Activated T-helper 2 cell treated with anti-CD3 and anti-CD28 coated beads, Interferon-gamma antibody, Interleukin-2, Interleukin-4, amounts not matched to agents 10 μg/mL and 5 μg/mL and 100 μg/mL, durations not matched to agents 14 hours and 24 hours and 36 hours (primary cell): ENCODE measurements at regions of chr9 and their contacts with region 1.

Region 1: GRCh38 chr9:68653141-68653595 is 51.9 kb upstream of the PIP5K1B start:
- DNase-seq: peak; percentile 22
- H3K4me3 Mint-ChIP-seq: peak overlapping the region; percentile 18
- H3K27ac Mint-ChIP-seq: peak overlapping the region; percentile 95
- H3K4me1 Mint-ChIP-seq: peaks cover 64% of the 10 kb centered on the region
- H3K27me3 Mint-ChIP-seq: no peaks in the 10 kb centered on the region

Region 2: GRCh38 chr9:68672215-68672614 is 19.0 kb after region 1 on chr9:
- intact Hi-C with region 1: loop called (anchors 1 kb)
- DNase-seq: no peak
- H3K4me3 Mint-ChIP-seq: no peak overlapping the region
- H3K27ac Mint-ChIP-seq: peak overlapping the region; percentile 25
- H3K4me1 Mint-ChIP-seq: peaks cover 22% of the 10 kb centered on the region
- H3K27me3 Mint-ChIP-seq: peaks cover 6% of the 10 kb centered on the region

Region 3: GRCh38 chr9:68714416-68715180 is 61.4 kb after region 1 on chr9:
- intact Hi-C with region 1: loop called (anchors 2 kb)
- DNase-seq: no peak
- H3K4me3 Mint-ChIP-seq: no peak overlapping the region
- H3K27ac Mint-ChIP-seq: peak overlapping the region; percentile 25
- H3K4me1 Mint-ChIP-seq: peaks cover 61% of the 10 kb centered on the region
- H3K27me3 Mint-ChIP-seq: peaks cover 4% of the 10 kb centered on the region

Region 4: DNA sequence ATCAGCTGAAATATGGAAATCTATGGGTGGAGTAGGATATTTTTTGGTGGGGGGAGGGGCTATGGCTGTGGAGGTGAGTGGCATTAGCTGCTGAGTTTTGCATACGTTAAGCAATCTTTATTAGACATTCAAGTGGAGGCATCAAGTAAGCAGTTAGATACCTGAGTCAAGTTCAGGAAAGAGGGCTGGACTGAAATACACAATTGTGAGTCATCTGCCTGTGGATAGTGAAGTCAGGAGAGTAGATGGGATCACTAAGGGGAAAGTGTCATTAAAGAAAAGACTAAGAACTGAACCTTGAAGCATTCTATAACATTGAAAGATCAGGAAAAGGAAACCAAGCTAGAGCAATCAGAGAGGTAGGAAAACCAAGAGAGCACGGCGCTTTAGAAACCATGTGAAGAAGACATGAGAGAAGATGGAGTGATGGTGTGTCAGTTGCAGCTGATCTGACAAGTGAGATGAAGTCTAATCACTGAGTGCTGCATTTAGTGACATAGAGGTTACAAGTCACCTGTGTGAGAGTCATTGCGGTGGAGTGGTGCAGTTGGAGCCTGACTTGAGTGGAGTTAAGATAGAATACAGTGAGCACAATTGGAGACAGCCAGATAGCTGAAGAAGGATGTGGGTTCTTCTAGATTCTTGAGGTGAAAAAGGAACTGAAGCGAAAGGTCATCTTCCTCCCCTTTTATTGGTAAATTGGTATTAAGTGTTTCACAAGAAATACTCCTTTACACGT is 140.6 kb after region 1 on chr9:
- intact Hi-C with region 1: loop called (anchors 2 kb)
- DNase-seq: peak; percentile 33
- H3K4me3 Mint-ChIP-seq: no peak overlapping the region
- H3K27ac Mint-ChIP-seq: no peak overlapping the region
- H3K4me1 Mint-ChIP-seq: peaks cover 25% of the 10 kb centered on the region
- H3K27me3 Mint-ChIP-seq: no peaks in the 10 kb centered on the region

Region 5: GRCh38 chr9:68949271-68950000 is 296.3 kb after region 1 on chr9:
- intact Hi-C with region 1: loop called (anchors 1 kb)
- DNase-seq: no peak
- H3K4me3 Mint-ChIP-seq: no peak overlapping the region
- H3K27ac Mint-ChIP-seq: peak overlapping the region; percentile 74
- H3K4me1 Mint-ChIP-seq: peaks cover 72% of the 10 kb centered on the region
- H3K27me3 Mint-ChIP-seq: no peaks in the 10 kb centered on the region

Region 6: DNA sequence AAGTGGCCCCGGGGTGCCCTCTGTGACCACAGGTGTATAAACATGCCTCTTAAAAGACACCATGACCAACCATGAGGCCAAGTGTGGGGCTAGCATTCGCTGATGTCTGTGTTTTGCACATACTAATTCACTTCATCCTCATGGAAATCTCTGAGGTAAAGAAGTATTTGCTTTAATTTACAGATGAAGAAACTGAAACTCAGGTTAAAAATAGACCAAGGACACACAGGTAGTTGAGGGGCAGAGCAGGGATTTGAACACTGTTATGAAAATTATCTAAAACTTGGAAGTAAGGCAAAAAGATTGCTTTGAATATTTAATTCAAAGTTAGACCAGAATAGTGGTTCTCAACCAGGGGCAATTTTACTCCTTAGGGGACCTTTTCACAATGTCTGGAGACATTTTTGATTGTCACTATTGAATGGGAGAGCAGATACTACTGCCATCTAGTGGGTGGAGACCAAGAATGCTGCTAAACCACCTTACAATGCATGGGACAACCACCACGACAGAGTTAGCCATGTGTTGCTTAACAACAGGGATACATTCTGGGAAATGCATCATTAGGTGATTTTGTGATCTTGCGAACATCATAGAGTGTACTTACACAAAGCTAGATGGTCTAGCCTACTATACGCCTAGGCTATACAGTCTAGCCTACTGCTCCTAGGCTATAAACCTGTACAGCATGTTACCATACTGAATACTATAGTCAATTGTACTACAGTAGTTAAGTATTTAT is 374.4 kb after region 1 on chr9:
- intact Hi-C with region 1: loop called (anchors 2 kb)
- DNase-seq: peak; percentile 30
- H3K4me3 Mint-ChIP-seq: no peak overlapping the region
- H3K27ac Mint-ChIP-seq: no peak overlapping the region
- H3K4me1 Mint-ChIP-seq: peaks cover 54% of the 10 kb centered on the region
- H3K27me3 Mint-ChIP-seq: no peaks in the 10 kb centered on the region